HEK293T (cell line): ENCODE measurements at regions of chr7 and their contacts with region 1.

Region 1: GRCh38 chr7:17991866-17992648 is 35.6 kb downstream of the PRPS1L1 start:
- DNase-seq: no peak

Region 2: DNA sequence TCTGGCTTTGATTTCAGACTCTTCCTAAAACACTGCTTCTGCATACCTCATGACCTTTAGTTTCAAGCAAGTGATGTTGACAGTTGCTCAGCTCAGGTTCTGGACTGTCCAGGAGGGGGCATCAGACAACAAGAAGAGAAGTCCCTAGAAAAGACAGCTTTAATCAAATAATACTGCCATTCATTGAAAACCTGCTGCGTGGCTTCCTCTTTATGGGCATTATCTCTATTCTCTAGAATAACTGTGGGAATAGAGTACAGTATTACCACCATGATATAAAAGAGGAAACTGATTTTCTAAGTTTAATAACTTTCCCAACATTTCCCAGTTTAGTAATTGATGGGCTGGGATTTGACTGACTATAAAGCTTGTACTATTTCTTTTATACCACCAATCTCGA is 222.1 kb before region 1 on chr7:
- CTCF ChIA-PET with region 1: interaction called, 14 read pairs
- POLR2A ChIA-PET with region 1: no interaction called
- DNase-seq: peak; percentile 53